ENCODE measurements at regions of chr7 and their contacts with region 1.

Region 1: DNA sequence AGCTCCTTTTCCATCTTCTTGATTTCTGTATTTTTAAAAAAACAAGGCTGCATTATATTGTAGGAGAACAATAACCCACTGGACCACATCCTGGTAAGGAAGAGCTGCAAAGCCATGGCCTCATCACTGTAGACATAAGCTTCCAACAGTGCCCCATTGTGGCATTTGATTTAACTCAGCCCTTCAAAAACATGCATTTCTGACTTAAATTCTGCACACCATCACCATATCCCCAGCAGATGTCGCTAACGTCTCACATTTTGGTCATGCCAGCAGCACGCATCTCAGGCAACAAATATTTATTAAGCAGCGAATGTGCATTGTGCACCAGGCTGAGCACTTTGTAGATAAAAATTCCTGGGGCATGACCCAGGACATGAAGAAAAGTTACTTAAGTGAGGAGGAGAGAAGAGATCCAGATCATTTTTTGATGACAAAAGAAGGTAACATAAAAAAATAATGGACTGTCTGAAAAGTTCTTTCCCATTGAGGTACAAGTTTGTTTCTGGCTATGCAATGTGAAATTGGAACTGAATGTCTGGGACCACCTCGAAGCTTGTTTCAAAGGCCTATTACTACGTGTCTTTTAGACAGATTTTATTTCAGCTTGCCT is 164.6 kb upstream of the CDCA7L start:
- DNase-seq: peak in 4 of 5 donors; percentile 84 to 95 (median 91)
- H3K4me3 ChIP-seq: no peak overlapping the region
- H3K27ac ChIP-seq: no peak overlapping the region
- H3K4me1 ChIP-seq: no peaks in the 10 kb centered on the region
- H3K27me3 ChIP-seq: no peaks in the 10 kb centered on the region
- CTCF ChIP-seq: peak; percentile 90

Region 2: GRCh38 chr7:21898265-21898930 is 211.9 kb before region 1 on chr7:
- intact Hi-C with region 1: no loop called
- DNase-seq: no peak
- H3K4me3 ChIP-seq: no peak overlapping the region
- H3K27ac ChIP-seq: no peak overlapping the region
- H3K4me1 ChIP-seq: no peaks in the 10 kb centered on the region
- H3K27me3 ChIP-seq: no peaks in the 10 kb centered on the region
- CTCF ChIP-seq: no peak

Region 3: DNA sequence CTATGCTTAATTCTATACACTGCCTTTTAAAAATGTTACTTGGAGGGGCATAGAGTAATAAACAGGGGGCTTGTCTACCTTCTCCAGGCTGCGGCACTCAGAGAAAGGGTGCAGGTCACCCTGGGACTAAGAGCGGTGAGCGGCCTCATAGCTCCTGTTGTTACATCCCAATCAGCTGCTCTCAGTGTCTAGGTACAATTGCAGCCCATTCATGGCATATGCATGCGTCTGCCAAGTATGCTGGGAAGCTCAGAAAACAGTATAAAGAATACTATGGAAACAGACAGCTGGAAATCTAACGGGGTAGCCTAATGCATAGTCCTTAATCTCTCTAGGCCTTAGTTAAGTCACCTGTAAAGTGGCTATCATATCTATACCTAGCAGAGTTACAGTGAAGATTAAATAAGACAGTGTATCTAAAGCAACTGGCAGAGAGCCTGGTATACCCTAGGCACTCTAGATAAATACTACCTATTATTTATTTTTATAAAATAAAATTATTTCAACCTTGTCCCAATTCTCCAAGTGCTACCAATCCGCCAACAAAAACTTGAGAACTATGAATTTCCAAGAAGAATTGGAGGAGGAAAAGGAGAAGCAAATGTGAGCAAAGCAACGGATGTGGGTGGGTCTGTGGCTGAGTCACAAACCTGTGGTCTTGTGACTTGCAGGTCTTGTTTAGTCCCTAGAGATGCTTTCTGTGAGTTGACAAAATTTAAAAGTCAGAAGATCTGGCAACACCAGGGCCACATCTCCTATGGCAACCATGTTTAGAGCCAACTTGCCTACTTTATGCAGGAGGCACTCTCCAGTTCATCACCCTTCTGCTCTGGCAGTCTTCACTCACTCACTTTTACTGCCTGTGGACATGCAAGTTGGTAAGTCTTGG is 63.6 kb after region 1 on chr7:
- intact Hi-C with region 1: no loop called
- DNase-seq: no peak
- H3K4me3 ChIP-seq: no peak overlapping the region
- H3K27ac ChIP-seq: no peak overlapping the region
- H3K4me1 ChIP-seq: no peaks in the 10 kb centered on the region
- H3K27me3 ChIP-seq: no peaks in the 10 kb centered on the region
- CTCF ChIP-seq: no peak

Region 4: GRCh38 chr7:22488643-22489462 is 378.5 kb after region 1 on chr7:
- intact Hi-C with region 1: loop called (anchors 5 kb)
- DNase-seq: peak in 4 of 5 donors; percentile 83 to 92 (median 89)
- H3K4me3 ChIP-seq: no peak overlapping the region
- H3K27ac ChIP-seq: no peak overlapping the region
- H3K4me1 ChIP-seq: no peaks in the 10 kb centered on the region
- H3K27me3 ChIP-seq: no peaks in the 10 kb centered on the region
- CTCF ChIP-seq: peak; percentile 90

Region 5: GRCh38 chr7:22651534-22652243 is 541.4 kb after region 1 on chr7:
- intact Hi-C with region 1: no loop called
- DNase-seq: no peak
- H3K4me3 ChIP-seq: no peak overlapping the region
- H3K27ac ChIP-seq: no peak overlapping the region
- H3K4me1 ChIP-seq: no peaks in the 10 kb centered on the region
- H3K27me3 ChIP-seq: no peaks in the 10 kb centered on the region
- CTCF ChIP-seq: no peak

Measured in kidney (tissue), 22 donors.